ENCODE measurements at regions of chr3 and their contacts with region 1.

Region 1: GRCh38 chr3:56878074-56878473 is 76.3 kb upstream of the ARHGEF3 start:
- DNase-seq: peak in 4 of 5 donors; percentile 38 to 63 (median 41)
- H3K4me3 ChIP-seq: peak overlapping the region in 1 of 2 donors; percentile 19
- H3K4me3 Mint-ChIP-seq: peak overlapping the region; percentile 21 to 86 (median 74)
- H3K27ac ChIP-seq: peak overlapping the region; percentile 48
- H3K27ac Mint-ChIP-seq: peak overlapping the region; percentile 74 to 93 (median 89)
- H3K4me1 ChIP-seq: peaks cover 53% of the 10 kb centered on the region
- H3K4me1 Mint-ChIP-seq: peaks cover 55 to 86% (median 72%) of the 10 kb centered on the region in 4 donors
- H3K27me3 ChIP-seq: no peaks in the 10 kb centered on the region
- H3K27me3 Mint-ChIP-seq: no peaks in the 10 kb centered on the region

Region 2: GRCh38 chr3:56894881-56895431 is 16.9 kb after region 1 on chr3:
- CTCF ChIA-PET with region 1: interaction called, 5 read pairs
- POLR2A ChIA-PET with region 1: interaction called, 8 read pairs
- intact Hi-C with region 1: loop called (anchors 2 kb)
- DNase-seq: peak; percentile 13 to 55 (median 24)
- H3K4me3 ChIP-seq: no peak overlapping the region
- H3K4me3 Mint-ChIP-seq: peak overlapping the region in 6 of 8 donors; percentile 39 to 63 (median 48)
- H3K27ac ChIP-seq: no peak overlapping the region
- H3K27ac Mint-ChIP-seq: peak overlapping the region; percentile 29 to 89 (median 66)
- H3K4me1 ChIP-seq: peaks cover 58% of the 10 kb centered on the region
- H3K4me1 Mint-ChIP-seq: peaks cover 55 to 82% (median 72%) of the 10 kb centered on the region in 4 donors
- H3K27me3 ChIP-seq: no peaks in the 10 kb centered on the region
- H3K27me3 Mint-ChIP-seq: no peaks in the 10 kb centered on the region

Measured in CD4-positive, alpha-beta memory T cell (primary cell).